T-cell (primary cell): ENCODE measurements at regions of chr1 and their contacts with region 1.

Region 1: DNA sequence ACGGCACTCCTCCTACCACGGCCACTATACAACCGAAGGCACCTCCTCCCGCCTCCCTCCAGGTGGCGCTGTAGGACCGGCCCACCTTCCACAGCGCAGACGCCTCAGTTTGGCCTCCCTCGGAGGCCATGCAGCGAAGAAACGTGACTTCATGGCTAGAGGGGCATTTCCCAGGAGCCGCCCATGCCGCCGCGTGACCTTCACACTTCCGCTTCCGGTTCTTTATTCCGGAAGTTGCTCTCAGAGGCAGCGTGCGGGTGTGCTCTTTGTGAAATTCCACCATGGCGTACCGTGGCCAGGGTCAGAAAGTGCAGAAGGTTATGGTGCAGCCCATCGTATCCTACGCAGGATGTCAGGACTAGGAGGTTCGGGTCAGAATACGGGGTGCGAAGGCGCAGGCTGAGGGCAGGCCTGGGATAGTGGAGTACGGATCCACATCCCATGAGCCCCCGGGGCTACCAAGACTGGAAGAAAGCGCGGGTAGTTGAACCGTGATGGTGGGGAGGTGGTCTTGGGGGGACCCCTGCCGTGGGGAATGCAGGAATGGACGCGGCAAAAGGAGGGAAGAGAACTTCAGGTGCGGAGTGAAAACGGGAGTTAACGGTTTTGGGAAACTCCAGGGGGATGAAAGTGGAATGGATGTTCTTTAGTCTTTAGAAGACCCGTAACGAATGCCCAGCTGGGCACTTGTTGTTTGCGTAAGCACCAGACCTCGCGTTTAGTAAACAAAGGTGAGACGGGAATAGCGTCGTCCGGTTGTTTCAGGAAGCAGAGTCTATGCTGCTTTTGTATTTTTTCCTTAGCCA is at the start of gene SNRPE:
- DNase-seq: peak; percentile 90 to 99 (median 96)
- ATAC-seq: peak; percentile 97 to 99 (median 98)
- H3K4me3 ChIP-seq: peak within 1 kb of the TSS; percentile 85 to 98
- H3K4me3 Mint-ChIP-seq: peak within 1 kb of the TSS; percentile 98 to 100 (median 99)
- H3K27ac ChIP-seq: peak within 1 kb of the TSS; percentile 63
- H3K27ac Mint-ChIP-seq: peak within 1 kb of the TSS; percentile 95 to 97
- H3K4me1 ChIP-seq: peaks cover 12 to 13% of the 10 kb centered on the region in 2 experiments
- H3K4me1 Mint-ChIP-seq: peaks cover 22 to 23% (median 23%) of the 10 kb centered on the region in 3 donors
- H3K27me3 ChIP-seq: no peaks in the 10 kb centered on the region
- H3K27me3 Mint-ChIP-seq: no peaks in the 10 kb centered on the region
- total RNA-seq, gene SNRPE: 50.6 to 80.9 (median 72.0) TPM

Region 2: GRCh38 chr1:203880606-203881005 is 19.0 kb after region 1 on chr1:
- CTCF ChIA-PET with region 1: no interaction called
- POLR2A ChIA-PET with region 1: no interaction called
- DNase-seq: no peak
- ATAC-seq: no peak
- H3K4me3 ChIP-seq: no peak overlapping the region
- H3K4me3 Mint-ChIP-seq: no peak overlapping the region
- H3K27ac ChIP-seq: no peak overlapping the region
- H3K27ac Mint-ChIP-seq: no peak overlapping the region
- H3K4me1 ChIP-seq: no peaks in the 10 kb centered on the region
- H3K4me1 Mint-ChIP-seq: no peaks in the 10 kb centered on the region
- H3K27me3 ChIP-seq: no peaks in the 10 kb centered on the region
- H3K27me3 Mint-ChIP-seq: no peaks in the 10 kb centered on the region

Region 3: DNA sequence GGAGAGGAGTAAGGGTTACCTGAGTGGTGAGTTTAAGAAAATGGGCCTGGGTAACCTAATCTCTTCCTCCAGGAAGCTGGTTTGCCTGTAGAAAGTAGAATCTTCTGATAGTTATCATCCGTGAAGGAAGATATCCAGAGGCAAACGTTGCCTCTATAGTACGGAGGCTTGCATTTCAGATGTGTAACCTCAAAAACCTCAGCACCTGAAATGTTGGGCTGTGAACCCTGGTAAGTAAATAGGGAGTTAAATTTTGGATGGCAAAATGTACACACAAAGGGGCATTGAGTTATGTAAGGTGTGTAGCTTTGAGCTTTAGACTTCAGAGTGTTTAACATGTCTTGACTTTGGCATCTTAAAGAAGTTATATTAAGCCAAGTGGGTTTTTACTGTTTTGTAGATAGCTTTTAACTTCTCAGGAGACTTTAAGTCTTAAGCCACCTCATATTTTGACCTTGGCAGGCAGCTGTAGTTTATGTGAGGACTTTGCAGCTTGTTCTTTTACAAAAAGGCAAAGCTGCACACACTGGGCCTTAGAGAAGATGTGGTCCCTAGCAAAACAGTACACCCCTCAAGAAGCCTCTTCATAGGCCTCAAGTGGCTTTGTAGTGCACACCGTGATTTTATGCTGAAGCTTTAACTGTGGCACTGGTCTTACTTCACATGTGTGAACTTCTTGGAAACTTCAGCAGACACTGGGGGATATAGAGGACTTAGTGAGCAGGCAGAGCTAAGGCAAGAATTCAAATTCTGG is 83.2 kb after region 1 on chr1:
- CTCF ChIA-PET with region 1: interaction called in 1 of 2 experiments, 10 read pairs
- POLR2A ChIA-PET with region 1: no interaction called
- DNase-seq: no peak
- ATAC-seq: no peak
- H3K4me3 ChIP-seq: no peak overlapping the region
- H3K4me3 Mint-ChIP-seq: no peak overlapping the region
- H3K27ac ChIP-seq: no peak overlapping the region
- H3K27ac Mint-ChIP-seq: no peak overlapping the region
- H3K4me1 ChIP-seq: no peaks in the 10 kb centered on the region
- H3K4me1 Mint-ChIP-seq: no peaks in the 10 kb centered on the region
- H3K27me3 ChIP-seq: no peaks in the 10 kb centered on the region
- H3K27me3 Mint-ChIP-seq: peaks cover 6 to 8% of the 10 kb centered on the region in 2 donors

Region 4: DNA sequence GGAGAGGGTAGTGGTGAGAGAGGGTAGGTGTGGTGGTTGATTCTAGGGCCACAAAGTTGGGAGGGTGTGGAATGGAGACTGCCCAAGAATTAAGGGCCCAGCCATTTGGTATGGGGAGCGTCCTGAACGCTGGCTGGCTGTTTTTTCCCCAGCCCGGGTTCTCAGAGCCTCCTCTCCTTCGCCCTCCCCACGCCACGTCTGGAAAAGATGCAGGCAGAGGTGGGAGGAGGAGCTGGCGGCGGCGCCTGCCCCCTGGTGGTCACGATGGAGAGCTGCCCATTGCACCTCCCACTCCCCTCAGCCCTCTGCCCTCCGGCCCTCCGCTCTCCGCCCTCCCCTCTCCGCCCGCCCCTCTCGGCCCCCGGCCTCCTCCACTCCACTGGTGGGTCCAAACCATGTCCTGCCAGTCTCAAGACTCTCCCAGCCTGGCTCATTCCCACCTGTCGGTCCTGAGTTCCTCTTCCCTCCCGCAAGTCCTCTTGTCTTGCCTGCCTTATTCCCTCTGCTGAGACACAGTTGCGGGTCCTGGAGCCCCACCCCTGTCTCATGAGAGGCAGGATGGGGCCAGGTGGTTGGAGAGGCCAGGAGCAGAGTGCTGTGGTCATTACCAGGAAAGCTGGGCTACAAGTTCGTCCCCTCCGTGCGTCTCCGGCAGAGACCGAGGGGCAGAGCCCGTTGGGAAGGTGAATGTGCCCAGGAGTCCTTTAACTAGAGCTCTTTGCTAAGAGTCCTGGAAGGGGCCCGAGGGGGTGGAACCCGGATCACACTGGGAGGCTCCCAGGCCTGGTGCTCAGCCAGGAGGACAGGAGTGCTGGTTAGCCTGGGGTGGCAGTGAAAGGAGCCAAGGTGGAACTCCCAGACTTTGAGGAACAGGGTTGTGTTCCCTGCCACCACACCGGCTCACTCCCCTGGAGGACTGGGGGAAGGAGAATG is 267.6 kb after region 1 on chr1:
- CTCF ChIA-PET with region 1: interaction called, 4 to 19 read pairs
- POLR2A ChIA-PET with region 1: no interaction called
- DNase-seq: peak in 32 of 35 experiments; percentile 24 to 82 (median 48)
- ATAC-seq: peak; percentile 84 to 92 (median 86)
- H3K4me3 ChIP-seq: no peak overlapping the region
- H3K4me3 Mint-ChIP-seq: peak overlapping the region in 1 of 3 donors; percentile 6
- H3K27ac ChIP-seq: no peak overlapping the region
- H3K27ac Mint-ChIP-seq: no peak overlapping the region
- H3K4me1 ChIP-seq: peaks cover 0 to 8% of the 10 kb centered on the region in 2 experiments
- H3K4me1 Mint-ChIP-seq: peaks cover 4 to 11% (median 6%) of the 10 kb centered on the region in 3 donors
- H3K27me3 ChIP-seq: peaks cover 0 to 17% of the 10 kb centered on the region in 2 experiments
- H3K27me3 Mint-ChIP-seq: no peaks in the 10 kb centered on the region

Region 5: GRCh38 chr1:205554026-205554811 is 1692.6 kb after region 1 on chr1:
- CTCF ChIA-PET with region 1: no interaction called
- POLR2A ChIA-PET with region 1: interaction called in 1 of 2 experiments, 10 read pairs
- DNase-seq: no peak
- ATAC-seq: no peak
- H3K4me3 ChIP-seq: no peak overlapping the region
- H3K4me3 Mint-ChIP-seq: no peak overlapping the region
- H3K27ac ChIP-seq: no peak overlapping the region
- H3K27ac Mint-ChIP-seq: no peak overlapping the region
- H3K4me1 ChIP-seq: no peaks in the 10 kb centered on the region
- H3K4me1 Mint-ChIP-seq: no peaks in the 10 kb centered on the region
- H3K27me3 ChIP-seq: peaks cover 0 to 30% of the 10 kb centered on the region in 2 experiments
- H3K27me3 Mint-ChIP-seq: peaks cover 53 to 57% of the 10 kb centered on the region in 2 donors